ENCODE measurements at regions of chr6 and their contacts with region 1.

Region 1: GRCh38 chr6:120681204-120681603 is 653.1 kb downstream of the TBC1D32 start:
- DNase-seq: no peak
- H3K4me3 ChIP-seq: no peak overlapping the region
- CTCF ChIP-seq: no peak
- POLR2A ChIP-seq: no peak

Region 2: GRCh38 chr6:120632975-120633374 is 48.2 kb before region 1 on chr6:
- intact Hi-C with region 1: loop called (anchors 2 kb)
- DNase-seq: no peak
- H3K4me3 ChIP-seq: no peak overlapping the region
- CTCF ChIP-seq: no peak
- POLR2A ChIP-seq: no peak